Ascending aorta (tissue), 2 donors: ENCODE measurements at regions of chr15 and their contacts with region 1.

Region 1: DNA sequence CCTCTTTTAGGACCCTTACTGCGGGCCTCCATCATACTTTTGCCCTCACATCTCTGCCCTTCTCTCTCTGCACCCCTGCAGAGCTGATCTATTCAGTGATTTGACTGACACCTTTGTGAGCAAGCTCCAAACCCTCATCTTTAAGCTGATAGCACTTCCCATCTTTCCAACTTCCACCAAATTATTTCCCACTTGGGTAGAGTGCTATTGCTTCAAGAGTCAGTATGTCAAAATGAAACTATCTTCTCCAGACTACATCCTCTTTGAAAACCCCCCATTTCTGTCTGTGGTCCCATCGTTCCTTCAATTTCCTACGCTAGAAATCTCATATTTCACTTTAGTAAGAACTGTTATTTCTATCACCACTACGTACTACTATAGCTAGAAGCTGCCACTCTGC is 19.7 kb downstream of the ZWILCH start:
- DNase-seq: no peak
- H3K4me3 ChIP-seq: no peak overlapping the region
- H3K27ac ChIP-seq: no peak overlapping the region
- H3K4me1 ChIP-seq: no peaks in the 10 kb centered on the region
- H3K27me3 ChIP-seq: no peaks in the 10 kb centered on the region
- CTCF ChIP-seq: no peak

Region 2: DNA sequence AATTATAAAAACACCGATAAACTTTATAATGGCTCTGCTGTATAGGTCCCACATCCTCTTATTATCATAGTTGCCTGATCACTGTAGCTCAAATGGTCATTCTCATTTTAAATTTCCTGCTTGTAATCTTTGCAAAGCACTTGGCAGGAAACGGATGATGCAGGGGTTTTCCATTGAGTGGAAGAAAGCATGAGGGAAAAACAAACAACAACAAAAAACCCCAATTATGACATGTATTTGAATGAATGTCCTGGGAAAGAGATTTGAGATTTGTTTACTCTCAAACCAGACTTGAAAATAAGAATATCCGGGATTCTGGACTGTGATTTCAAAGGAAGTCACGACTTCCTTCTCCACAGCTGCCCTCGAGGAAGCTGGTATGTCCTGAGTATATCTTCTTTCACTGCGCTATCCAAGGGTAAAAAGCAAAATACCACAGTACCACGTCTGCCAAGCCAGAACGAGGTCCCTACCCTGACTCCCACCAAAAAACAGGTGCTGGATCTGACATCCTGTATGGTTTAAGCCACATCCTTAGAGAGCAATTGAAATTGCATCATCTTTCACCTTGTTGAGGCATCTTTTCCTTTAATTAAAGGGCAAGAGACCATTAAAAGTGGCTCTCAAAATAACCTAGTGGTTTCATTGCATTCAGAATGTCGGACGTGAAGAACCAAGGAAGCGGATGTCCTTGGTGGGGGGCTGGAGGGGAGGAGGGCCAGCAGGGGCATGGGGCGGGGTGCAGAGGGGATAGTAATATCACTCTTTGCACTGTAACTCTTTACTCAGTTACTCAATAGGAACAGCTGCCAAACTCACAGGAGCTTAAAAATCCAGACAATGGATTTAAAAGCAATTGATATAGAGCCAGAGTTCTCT is 154.8 kb before region 1 on chr15:
- intact Hi-C with region 1: no loop called
- DNase-seq: no peak
- H3K4me3 ChIP-seq: peak overlapping the region; percentile 42 to 50
- H3K27ac ChIP-seq: peak overlapping the region; percentile 24 to 33
- H3K4me1 ChIP-seq: peaks cover 0 to 2% of the 10 kb centered on the region in 2 donors
- H3K27me3 ChIP-seq: no peaks in the 10 kb centered on the region
- CTCF ChIP-seq: no peak

Region 3: DNA sequence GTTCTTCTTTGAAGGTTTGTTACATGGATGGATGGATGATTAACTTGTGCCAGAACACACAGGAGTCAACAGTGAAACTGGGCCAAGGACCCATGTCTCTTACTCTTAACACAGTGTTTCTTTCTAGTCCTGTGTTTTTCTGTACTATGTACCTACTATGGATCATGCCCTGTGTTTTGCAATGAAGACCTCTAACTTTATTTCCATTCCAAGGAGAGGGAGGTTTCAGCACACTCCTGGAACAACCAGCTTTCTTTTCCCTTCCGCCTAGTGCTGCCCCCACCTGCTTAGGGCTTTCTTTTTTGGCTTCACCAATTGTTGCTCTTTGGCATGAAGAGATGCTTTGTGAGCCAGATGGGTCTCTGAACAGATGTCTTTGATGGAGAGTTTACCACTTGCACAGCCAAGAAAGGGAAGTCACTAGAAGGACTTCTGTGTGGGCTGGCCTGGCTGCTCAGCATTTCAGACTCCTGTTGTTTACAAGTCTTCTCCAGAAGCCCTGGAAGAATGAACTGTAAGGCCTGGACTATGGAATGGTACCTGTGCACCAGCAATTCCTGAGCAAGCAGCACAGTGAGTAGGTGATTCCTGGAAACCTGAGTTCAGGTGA is 71.8 kb before region 1 on chr15:
- intact Hi-C with region 1: no loop called
- DNase-seq: no peak
- H3K4me3 ChIP-seq: no peak overlapping the region
- H3K27ac ChIP-seq: no peak overlapping the region
- H3K4me1 ChIP-seq: no peaks in the 10 kb centered on the region
- H3K27me3 ChIP-seq: no peaks in the 10 kb centered on the region
- CTCF ChIP-seq: no peak

Region 4: DNA sequence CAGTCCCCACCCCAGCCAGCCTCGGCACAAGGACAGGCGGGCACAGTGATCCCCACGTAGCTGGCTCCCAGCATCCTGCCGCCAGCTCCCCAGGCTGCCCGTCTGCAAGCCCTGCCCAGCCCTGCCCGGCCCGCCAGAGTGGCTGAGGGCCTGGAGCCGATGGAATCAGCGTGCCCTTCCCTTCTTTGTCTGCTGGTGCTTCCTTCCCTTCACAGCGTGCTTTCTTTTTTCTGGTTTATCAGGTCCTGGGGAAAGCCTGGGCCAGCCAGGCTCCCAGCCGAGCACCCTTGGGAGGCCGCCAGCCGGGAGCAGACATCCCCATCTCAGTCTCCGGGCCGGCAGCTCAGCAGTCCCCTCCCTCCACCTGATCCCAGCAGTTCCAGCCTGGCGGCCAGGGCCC is 122.5 kb after region 1 on chr15:
- intact Hi-C with region 1: loop called (anchors 5 kb)
- DNase-seq: no peak
- H3K4me3 ChIP-seq: peak overlapping the region in 1 of 2 donors; percentile 36
- H3K27ac ChIP-seq: peak overlapping the region; percentile 17 to 69
- H3K4me1 ChIP-seq: peaks cover 3 to 18% of the 10 kb centered on the region in 2 donors
- H3K27me3 ChIP-seq: no peaks in the 10 kb centered on the region
- CTCF ChIP-seq: no peak